PC-9 (cell line): ENCODE measurements at regions of chr5 and their contacts with region 1.

Region 1: GRCh38 chr5:139651853-139652787 is 4.0 kb downstream of the CXXC5 start:
- DNase-seq: peak; percentile 69 to 79
- H3K4me3 ChIP-seq: peak overlapping the region; percentile 97; the same call in 1 of the 2 replicates
- H3K27ac ChIP-seq: peak overlapping the region; percentile 47
- H3K4me1 ChIP-seq: peaks cover 55% of the 10 kb centered on the region
- H3K27me3 ChIP-seq: no peaks in the 10 kb centered on the region
- CTCF ChIP-seq: no peak

Region 2: DNA sequence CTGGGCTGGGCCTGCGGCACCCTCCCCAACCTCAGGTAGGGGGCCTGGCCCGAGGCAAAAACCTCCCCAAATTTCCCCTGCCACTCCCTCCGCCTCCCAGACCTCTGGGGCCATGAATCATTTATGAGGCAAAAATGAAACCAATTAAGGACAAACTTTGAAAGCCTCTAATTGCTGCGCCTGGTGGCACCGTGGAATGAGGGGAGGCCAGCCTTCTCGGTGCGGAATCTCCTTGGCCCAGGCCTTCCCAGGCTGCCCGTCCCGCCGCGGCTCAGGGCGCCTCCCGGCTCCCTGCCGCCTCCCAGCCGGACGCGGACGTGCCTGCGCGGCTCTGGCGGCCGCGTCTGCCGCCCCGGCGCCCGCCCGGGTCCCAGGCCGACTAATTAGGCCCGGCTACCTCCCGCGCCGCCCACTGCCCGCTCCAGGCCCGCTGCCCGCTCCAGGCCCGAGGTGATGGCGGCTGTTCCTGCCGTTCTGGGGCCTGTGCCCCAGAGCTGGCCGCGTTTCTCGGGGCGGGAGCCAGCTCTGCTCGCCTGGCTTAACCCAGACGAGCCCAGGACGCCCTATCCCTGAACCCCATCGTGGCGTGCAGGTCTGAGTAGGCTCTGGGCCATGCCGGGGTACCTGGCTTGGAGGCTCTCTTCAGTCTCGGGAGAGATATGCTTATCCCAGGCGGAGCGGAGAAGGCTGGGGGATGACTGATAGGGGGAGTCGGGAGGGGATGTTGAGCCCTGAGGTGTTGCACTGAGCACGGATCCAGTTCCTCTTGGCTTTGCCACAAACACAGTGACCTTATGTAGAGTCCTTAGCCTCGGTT is 16.2 kb after region 1 on chr5:
- CTCF ChIA-PET with region 1: interaction called, 4 read pairs
- POLR2A ChIA-PET with region 1: interaction called, 21 read pairs
- intact Hi-C with region 1: no loop called
- DNase-seq: peak in 1 of 2 experiments; percentile 41
- H3K4me3 ChIP-seq: peak overlapping the region; percentile 14; the same call in 1 of the 2 replicates
- H3K27ac ChIP-seq: no peak overlapping the region
- H3K4me1 ChIP-seq: peaks cover 14% of the 10 kb centered on the region
- H3K27me3 ChIP-seq: no peaks in the 10 kb centered on the region
- CTCF ChIP-seq: no peak

Region 3: DNA sequence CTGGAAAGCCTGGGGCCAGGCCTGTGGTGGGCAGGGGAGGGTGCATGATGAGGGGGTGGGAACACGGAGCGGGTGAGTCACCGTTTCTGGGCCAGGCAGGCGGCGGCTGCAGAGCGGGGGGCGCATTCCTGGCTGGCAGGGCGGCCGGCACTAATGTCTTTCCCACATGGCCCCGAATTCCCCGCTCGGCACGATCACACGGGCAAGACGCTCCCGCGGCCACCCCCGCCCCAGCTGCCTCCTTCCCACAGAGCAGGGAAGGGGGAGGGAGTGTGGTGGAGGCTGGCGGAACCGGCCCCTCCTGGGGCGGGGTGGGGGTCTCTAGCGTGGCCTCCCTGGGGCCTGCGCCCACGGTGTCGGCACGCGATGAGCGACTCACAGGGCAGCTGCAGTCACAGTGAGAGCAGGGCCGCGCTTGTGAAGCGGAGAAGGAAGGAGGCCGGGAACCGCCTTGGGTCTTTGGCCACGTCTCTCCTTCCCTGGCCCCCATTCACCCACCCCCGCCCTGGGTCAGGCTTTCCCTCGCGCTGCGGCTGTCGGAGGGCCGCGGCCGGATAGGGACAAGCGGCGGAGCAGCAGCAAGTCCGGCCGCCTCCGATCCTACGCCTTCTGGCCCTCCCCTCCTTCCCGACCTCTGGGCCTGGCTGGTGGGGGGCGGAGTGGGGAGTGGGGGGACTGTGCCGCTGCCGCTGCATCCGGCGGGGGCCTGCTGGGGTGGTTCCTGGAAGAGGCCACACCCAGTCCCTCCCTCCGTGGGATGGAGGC is 45.0 kb after region 1 on chr5:
- CTCF ChIA-PET with region 1: interaction called, 3 read pairs
- POLR2A ChIA-PET with region 1: interaction called, 5 read pairs
- intact Hi-C with region 1: loop called (anchors 2 kb)
- DNase-seq: peak in 1 of 2 experiments; percentile 75
- H3K4me3 ChIP-seq: peak overlapping the region; percentile 45; the same call in 1 of the 2 replicates
- H3K27ac ChIP-seq: no peak overlapping the region
- H3K4me1 ChIP-seq: peaks cover 4% of the 10 kb centered on the region; the same call in 1 of the 2 replicates
- H3K27me3 ChIP-seq: peaks cover 15% of the 10 kb centered on the region; the same call in 1 of the 2 replicates
- CTCF ChIP-seq: no peak

Region 4: GRCh38 chr5:140038373-140038957 is 386.3 kb after region 1 on chr5:
- CTCF ChIA-PET with region 1: no interaction called
- POLR2A ChIA-PET with region 1: no interaction called
- intact Hi-C with region 1: no loop called
- DNase-seq: no peak
- H3K4me3 ChIP-seq: no peak overlapping the region
- H3K27ac ChIP-seq: no peak overlapping the region
- H3K4me1 ChIP-seq: peaks cover 35% of the 10 kb centered on the region
- H3K27me3 ChIP-seq: no peaks in the 10 kb centered on the region
- CTCF ChIP-seq: no peak